GM10248 (cell line): ENCODE measurements at regions of chr12 and their contacts with region 1.

Region 1: DNA sequence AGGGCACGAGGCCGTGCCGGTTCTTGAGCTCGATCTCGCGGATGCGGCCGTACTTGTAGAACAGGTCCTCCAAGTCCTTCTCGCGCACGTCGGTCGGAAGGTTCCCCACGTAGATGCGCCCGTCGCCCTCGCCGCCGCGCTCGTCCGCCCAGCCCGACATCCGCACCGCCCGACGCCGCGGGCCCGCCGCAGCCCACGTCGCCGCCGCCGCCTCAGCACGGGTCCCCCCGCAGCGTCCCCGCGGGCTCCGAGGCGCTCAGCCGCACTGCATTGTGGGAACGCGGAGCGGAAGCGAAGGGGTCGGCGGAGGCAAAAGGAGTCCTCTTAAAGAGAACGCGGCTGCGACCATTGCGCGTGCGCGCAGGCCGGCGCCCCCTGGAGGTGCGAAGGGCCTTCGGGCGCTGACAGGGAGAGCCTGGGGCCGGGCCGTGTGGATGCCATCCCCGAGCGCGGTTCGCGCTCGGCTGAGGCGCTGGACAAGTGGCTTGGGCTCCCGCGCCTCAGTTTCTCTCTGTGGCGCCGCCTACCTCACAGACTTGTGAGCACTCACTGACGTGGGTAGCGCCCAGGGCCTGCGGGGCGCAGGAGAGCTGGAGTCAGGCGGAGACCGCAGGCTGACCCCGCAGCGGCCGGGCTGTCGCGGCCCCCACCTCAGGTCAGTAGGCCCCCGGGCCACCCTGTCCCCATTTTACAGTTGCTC is at the start of gene SRSF9:
- DNase-seq: peak; percentile 99
- CTCF ChIP-seq: peak; percentile 92

Region 2: GRCh38 chr12:119911182-119911581 is 558.4 kb before region 1 on chr12:
- CTCF ChIA-PET with region 1: no interaction called
- POLR2A ChIA-PET with region 1: no interaction called
- DNase-seq: no peak
- CTCF ChIP-seq: no peak

Region 3: DNA sequence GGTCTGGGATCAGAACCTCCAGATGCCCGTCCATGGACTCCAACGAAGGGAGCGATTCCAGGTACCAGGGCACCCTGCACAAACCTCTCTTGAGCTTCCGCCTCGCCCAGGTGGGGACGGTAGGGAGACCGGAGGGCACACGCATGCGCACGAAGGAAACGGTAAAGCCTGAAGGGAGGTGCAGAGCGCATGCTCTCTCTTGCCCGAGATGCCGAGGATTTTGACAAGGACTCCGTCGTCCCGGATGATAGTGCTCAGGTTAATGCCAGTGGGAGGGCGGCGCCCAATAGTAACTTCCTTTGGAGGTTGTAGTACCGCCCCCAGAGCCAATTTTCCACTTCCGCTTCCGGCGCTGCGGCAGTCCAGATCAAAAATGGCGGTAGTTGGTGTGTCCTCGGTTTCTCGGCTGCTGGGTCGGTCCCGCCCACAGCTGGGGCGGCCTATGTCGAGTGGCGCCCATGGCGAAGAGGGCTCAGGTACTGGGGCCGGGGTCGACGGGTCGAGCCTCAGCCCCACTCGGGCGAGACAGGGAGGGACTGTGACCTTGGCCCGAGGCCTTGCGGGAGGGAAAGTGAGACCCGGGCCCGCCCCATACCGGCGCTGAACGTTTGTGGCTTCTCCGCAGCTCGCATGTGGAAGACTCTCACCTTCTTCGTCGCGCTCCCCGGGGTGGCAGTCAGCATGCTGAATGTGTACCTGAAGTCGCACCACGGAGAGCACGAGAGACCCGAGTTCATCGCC is 31.7 kb before region 1 on chr12 and contains the start of gene COX6A1:
- CTCF ChIA-PET with region 1: interaction called, 22 read pairs
- POLR2A ChIA-PET with region 1: no interaction called
- DNase-seq: peak; percentile 98
- CTCF ChIP-seq: peak; percentile 2

Region 4: GRCh38 chr12:120445911-120446843 is 23.4 kb before region 1 on chr12 and contains the starts of genes GATC and TRIAP1:
- CTCF ChIA-PET with region 1: interaction called, 38 read pairs
- POLR2A ChIA-PET with region 1: no interaction called
- DNase-seq: peak; percentile 90
- CTCF ChIP-seq: no peak

Region 5: DNA sequence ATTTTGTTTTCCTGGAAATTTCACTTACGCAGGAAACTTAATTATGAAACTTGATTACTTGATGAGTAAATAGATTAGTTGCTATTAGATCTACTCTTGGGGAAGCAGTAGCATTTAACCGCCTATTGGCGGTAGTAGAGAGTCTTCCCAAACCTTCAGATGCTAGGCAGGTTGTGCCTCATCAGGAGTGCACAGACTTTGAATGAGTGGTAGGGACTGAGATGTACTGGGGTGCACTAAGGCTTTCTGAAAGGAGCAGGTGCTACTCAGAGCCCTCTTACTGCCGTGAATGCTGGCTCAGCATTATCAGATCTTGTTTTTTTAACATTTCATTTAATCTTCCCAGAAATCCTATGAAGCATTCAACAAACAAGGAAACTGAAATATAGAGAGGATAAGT is 15.6 kb before region 1 on chr12:
- CTCF ChIA-PET with region 1: interaction called, 50 read pairs
- POLR2A ChIA-PET with region 1: interaction called, 6 read pairs
- DNase-seq: peak; percentile 50
- CTCF ChIP-seq: peak; percentile 49

Region 6: DNA sequence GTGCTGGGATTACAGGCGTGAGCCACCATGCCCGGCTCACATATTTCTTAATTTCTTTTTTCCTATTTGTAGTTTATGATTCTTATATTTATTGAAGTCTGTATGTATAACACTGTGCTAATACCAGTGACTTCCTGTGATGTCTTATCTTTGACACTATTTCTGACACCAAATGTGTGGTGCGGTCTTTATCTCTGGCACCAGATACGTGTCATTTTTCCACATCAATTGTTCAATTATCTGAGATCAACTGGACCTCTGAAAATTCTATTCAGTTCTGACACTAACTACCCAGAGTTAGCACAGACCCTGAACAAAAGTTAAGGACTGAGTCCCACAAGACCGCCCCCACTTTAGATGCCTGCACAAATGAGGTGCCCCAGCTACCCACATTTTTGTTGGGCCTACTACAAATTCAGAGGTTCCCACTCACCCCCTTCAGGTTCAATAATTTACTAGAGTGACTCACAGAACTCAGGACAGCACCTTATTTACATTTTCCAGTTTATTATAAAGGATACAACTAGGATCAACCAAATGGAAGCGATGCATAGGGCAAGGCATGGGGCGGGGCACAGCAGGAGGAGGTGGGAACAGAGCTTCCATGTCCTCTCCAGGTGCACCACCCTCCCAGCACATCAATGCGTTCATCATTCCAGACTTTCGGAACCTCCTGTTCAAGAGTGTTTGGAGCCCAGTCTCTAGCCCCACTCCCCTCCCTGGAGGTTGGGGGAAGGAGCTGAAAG is 11.6 kb after region 1 on chr12:
- CTCF ChIA-PET with region 1: interaction called, 30 read pairs
- POLR2A ChIA-PET with region 1: no interaction called
- DNase-seq: no peak
- CTCF ChIP-seq: no peak

Region 7: DNA sequence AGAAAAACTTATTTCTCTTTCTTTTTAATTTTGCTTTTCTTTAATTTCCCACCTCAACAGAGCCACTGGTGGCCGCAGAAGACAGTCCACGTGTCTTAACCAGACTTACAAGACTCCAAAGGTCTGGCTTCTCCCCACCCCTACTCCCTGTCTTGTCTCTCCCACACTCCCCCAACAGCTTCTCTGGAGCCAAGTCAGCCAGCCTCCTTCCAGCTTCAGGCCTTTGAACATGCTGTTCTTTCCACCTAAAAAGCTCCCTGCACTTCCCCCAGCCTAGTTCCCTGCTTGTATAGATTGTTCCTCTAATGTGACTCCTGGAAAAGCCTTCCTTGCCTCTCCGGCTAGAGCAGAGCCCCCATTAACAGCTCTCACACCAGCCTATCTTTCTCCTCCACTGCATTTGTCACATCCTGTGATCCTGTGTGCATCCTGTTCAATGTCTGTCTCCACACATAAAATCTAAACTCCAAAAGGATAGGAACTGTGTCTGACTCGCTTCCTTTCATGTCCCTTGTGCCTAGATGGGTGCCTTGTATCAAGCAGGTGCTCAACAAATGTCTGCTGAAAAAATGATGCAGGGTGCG is 18.5 kb after region 1 on chr12:
- CTCF ChIA-PET with region 1: interaction called, 11 read pairs
- POLR2A ChIA-PET with region 1: no interaction called
- DNase-seq: no peak
- CTCF ChIP-seq: no peak